Aorta (tissue), 5 donors: ENCODE measurements at regions of chr4 and their contacts with region 1.

Region 1: DNA sequence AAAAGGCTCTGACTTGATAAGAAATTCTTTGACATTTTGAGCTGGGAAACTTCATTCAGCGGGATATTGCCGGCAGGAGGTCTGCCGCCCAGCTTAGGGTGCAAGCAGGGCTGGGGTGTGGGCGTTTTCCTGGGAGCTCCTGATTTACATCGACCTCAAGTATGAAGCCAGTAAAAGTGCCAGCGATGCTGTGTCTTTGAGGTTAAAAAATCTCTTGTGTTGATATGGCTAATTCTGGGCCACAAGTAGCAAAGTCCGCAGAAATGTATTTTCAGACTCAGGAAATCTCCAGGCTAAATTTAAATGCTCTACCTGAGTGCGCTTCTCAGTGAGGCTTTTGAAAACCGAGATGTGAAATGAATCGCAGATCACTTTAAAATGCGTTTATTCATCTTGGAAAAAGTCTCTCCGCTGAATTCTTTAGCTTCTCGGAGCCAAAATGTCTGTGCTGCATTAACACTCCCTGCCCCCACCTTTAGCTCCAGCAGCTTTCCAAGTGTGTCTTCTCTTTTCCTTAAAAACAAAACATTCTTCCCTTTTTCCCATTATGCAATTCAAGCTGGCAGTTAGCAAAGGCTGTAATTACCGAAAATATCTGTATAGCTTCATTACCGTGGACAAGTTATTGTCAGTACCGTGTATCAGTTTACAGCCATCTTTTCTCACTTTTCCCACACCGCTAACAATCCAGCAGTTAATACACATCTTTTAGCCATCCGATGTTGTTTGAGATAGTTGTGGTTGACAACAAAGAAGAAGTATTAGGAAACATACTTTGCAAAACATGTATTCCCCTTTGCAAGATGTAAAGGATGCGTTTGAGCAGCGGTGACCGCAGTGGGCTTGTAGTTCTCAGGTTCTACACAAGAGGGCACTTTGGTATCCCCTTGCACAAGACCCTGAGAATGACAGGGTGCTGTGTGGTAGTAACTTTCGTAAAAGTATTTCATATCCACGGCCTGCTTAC is 136.0 kb upstream of the STX18 start:
- DNase-seq: no peak
- ATAC-seq: peak; percentile 79
- H3K4me3 ChIP-seq: peak overlapping the region; percentile 21 to 23
- H3K27ac ChIP-seq: no peak overlapping the region
- H3K4me1 ChIP-seq: peaks cover 0 to 2% of the 10 kb centered on the region in 2 donors
- H3K27me3 ChIP-seq: no peaks in the 10 kb centered on the region

Region 2: DNA sequence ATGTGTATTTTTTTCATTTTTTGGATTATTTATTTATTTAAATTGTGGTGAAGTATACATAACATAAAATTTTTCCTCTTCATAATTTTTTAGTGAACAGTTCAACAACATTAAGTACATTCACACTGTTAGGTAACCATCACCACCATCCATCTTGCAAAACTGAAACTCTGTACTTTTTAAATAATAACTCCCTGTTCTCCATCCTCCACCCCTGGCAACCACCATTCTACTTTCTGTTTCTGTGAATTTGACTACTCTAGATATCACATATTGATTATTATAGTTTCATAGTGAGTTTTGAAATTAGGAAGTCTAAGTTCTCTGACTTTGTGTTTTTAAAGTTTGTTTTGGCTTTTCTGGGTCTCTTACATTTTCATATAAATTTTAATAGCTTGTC is 46.7 kb before region 1 on chr4:
- intact Hi-C with region 1: no loop called
- DNase-seq: no peak
- ATAC-seq: no peak
- H3K4me3 ChIP-seq: no peak overlapping the region
- H3K27ac ChIP-seq: no peak overlapping the region
- H3K4me1 ChIP-seq: no peaks in the 10 kb centered on the region
- H3K27me3 ChIP-seq: no peaks in the 10 kb centered on the region

Region 3: DNA sequence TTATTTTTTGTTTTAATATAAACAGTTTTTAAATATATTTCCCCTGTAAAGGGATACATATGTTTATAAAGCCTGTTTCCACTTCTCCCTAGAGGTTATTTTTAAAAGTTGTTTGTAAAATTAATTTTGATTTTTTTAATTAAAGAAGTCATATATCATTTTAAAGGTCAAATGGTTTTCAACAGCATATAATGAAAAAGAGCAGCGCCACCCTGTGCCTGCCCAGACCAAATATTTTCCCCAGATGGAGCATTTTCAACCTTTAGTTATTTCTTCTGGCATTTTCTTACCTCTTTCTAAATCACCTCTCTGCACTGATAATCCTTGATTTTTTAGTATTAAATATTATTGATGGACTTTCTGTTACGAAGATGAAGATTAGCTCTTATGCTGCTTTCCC is 202.7 kb after region 1 on chr4:
- intact Hi-C with region 1: loop called in 1 of 2 experiments (anchors 10 kb)
- DNase-seq: no peak
- ATAC-seq: no peak
- H3K4me3 ChIP-seq: no peak overlapping the region
- H3K27ac ChIP-seq: no peak overlapping the region
- H3K4me1 ChIP-seq: no peaks in the 10 kb centered on the region
- H3K27me3 ChIP-seq: no peaks in the 10 kb centered on the region